HepG2 (cell line): ENCODE measurements at regions of chr10 and their contacts with region 1.

Region 1: DNA sequence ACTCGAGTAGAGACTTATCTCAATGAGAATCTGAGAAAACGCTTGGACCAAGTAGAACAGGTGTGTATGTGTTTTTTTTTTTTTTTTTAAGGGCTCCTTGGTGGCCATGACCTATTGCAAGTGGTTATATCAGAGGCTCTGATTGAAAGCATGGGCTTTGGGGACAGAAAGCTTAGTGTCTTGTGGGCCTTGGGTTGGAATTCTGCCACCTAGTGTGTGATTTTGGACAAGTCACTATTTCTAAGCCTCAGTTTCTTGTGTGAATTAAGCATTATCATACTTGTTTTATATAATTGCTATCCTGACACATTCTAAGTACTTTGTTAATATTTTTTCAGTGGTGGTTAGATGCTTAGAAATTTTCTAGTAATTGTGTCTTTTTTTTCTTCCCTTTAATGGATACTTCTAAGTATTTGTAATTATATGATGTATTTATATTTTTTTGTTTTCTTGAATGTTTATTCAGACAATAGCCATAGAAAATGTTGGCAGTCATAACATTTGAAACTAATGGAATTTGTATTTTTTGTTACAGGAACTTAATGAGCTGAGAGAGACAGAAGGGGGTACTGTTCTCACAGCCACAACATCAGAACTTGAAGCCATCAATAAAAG is 33.1 kb downstream of the SMC3 start:
- DNase-seq: peak; percentile 62
- ATAC-seq: peak; percentile 75
- H3K4me3 ChIP-seq: no peak overlapping the region
- H3K27ac ChIP-seq: no peak overlapping the region
- H3K4me1 ChIP-seq: no peaks in the 10 kb centered on the region
- H3K27me3 ChIP-seq: no peaks in the 10 kb centered on the region
- CTCF ChIP-seq: peak; percentile 54
- EP300 ChIP-seq: no peak
- POLR2A ChIP-seq: no peak
- RAD21 ChIP-seq: no peak

Region 2: GRCh38 chr10:110305767-110306451 is 294.7 kb before region 1 on chr10:
- CTCF ChIA-PET with region 1: interaction called, 19 read pairs
- POLR2A ChIA-PET with region 1: interaction called, 3 read pairs
- in situ Hi-C with region 1: no loop called
- intact Hi-C with region 1: loop called (anchors 1 kb)
- DNase-seq: peak; percentile 74
- ATAC-seq: peak; percentile 51
- H3K4me3 ChIP-seq: peak overlapping the region in 2 of 3 experiments; percentile 93 to 99; a peak in 3 of 6 replicates
- H3K27ac ChIP-seq: peak overlapping the region; percentile 85
- H3K4me1 ChIP-seq: peaks cover 32% of the 10 kb centered on the region
- H3K27me3 ChIP-seq: no peaks in the 10 kb centered on the region; a peak in 1 of 5 replicates
- CTCF ChIP-seq: peak; percentile 69
- EP300 ChIP-seq: no peak
- POLR2A ChIP-seq: no peak
- RAD21 ChIP-seq: 0 out of 2 replicates have a peak, but pooled peaks have one; percentile 22

Region 3: GRCh38 chr10:110311357-110311949 is 289.1 kb before region 1 on chr10:
- CTCF ChIA-PET with region 1: interaction called, 19 read pairs
- POLR2A ChIA-PET with region 1: no interaction called
- in situ Hi-C with region 1: no loop called
- intact Hi-C with region 1: loop called (anchors 1 kb)
- DNase-seq: peak; percentile 42
- ATAC-seq: peak; percentile 68
- H3K4me3 ChIP-seq: no peak overlapping the region
- H3K27ac ChIP-seq: no peak overlapping the region
- H3K4me1 ChIP-seq: no peaks in the 10 kb centered on the region
- H3K27me3 ChIP-seq: peaks cover 0 to 3% of the 10 kb centered on the region in 2 experiments; a peak in 1 of 5 replicates
- CTCF ChIP-seq: peak; percentile 77
- EP300 ChIP-seq: no peak
- POLR2A ChIP-seq: no peak
- RAD21 ChIP-seq: peak; percentile 48; the same call in 1 of the 2 replicates

Region 4: GRCh38 chr10:110323503-110323902 is 277.1 kb before region 1 on chr10:
- CTCF ChIA-PET with region 1: no interaction called
- POLR2A ChIA-PET with region 1: no interaction called
- in situ Hi-C with region 1: no loop called
- intact Hi-C with region 1: no loop called
- DNase-seq: no peak
- ATAC-seq: no peak
- H3K4me3 ChIP-seq: no peak overlapping the region
- H3K27ac ChIP-seq: no peak overlapping the region
- H3K4me1 ChIP-seq: no peaks in the 10 kb centered on the region
- H3K27me3 ChIP-seq: peaks cover 0 to 27% of the 10 kb centered on the region in 2 experiments; a peak in 2 of 5 replicates
- CTCF ChIP-seq: no peak
- EP300 ChIP-seq: no peak
- POLR2A ChIP-seq: no peak
- RAD21 ChIP-seq: no peak

Region 5: GRCh38 chr10:110556969-110557601 is 43.5 kb before region 1 on chr10:
- CTCF ChIA-PET with region 1: interaction called, 9 read pairs
- POLR2A ChIA-PET with region 1: no interaction called
- in situ Hi-C with region 1: no loop called
- intact Hi-C with region 1: loop called (anchors 1 kb)
- DNase-seq: peak; percentile 24
- ATAC-seq: peak; percentile 63
- H3K4me3 ChIP-seq: no peak overlapping the region
- H3K27ac ChIP-seq: no peak overlapping the region
- H3K4me1 ChIP-seq: no peaks in the 10 kb centered on the region
- H3K27me3 ChIP-seq: peaks cover 0 to 2% of the 10 kb centered on the region in 2 experiments; a peak in 2 of 5 replicates
- CTCF ChIP-seq: peak; percentile 65
- EP300 ChIP-seq: no peak
- POLR2A ChIP-seq: no peak
- RAD21 ChIP-seq: no peak; the same call in 1 of the 2 replicates

Region 6: GRCh38 chr10:110834629-110835301 is 234.2 kb after region 1 on chr10:
- CTCF ChIA-PET with region 1: no interaction called
- POLR2A ChIA-PET with region 1: no interaction called
- in situ Hi-C with region 1: no loop called
- intact Hi-C with region 1: no loop called
- DNase-seq: peak; percentile 50
- ATAC-seq: peak; percentile 26
- H3K4me3 ChIP-seq: peak overlapping the region in 1 of 3 experiments; percentile 62; a peak in 2 of 6 replicates
- H3K27ac ChIP-seq: peak overlapping the region; percentile 34
- H3K4me1 ChIP-seq: peaks cover 89% of the 10 kb centered on the region
- H3K27me3 ChIP-seq: no peaks in the 10 kb centered on the region; a peak in 2 of 5 replicates
- CTCF ChIP-seq: no peak
- EP300 ChIP-seq: no peak
- POLR2A ChIP-seq: no peak
- RAD21 ChIP-seq: no peak